ENCODE measurements at regions of chr10 and their contacts with region 1.

Region 1: DNA sequence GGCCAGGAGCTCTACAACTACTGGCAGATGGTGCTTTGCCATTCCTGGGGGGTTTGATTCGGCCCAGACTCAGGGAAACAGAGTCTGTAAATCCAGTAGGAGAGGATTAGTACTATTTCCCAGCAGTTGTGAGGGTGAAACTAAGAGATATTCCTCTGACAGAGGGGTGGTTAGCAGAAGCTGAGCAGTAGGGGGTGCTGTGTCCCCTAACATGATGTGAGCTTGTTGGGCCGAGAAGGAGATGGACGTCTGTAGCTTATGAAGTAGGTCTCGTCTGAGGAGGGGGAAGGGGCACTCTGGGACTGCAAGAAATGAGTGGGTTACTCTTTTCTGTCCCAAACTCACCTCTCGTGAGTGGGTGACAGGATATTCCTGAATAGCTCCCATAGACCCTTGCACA is 179.2 kb upstream of the MBL2 start:
- DNase-seq: peak in 1 of 2 experiments; percentile 45
- H3K4me3 ChIP-seq: no peak overlapping the region
- H3K27ac ChIP-seq: no peak overlapping the region
- H3K4me1 ChIP-seq: no peaks in the 10 kb centered on the region
- H3K27me3 ChIP-seq: no peaks in the 10 kb centered on the region
- CTCF ChIP-seq: peak; percentile 56

Region 2: DNA sequence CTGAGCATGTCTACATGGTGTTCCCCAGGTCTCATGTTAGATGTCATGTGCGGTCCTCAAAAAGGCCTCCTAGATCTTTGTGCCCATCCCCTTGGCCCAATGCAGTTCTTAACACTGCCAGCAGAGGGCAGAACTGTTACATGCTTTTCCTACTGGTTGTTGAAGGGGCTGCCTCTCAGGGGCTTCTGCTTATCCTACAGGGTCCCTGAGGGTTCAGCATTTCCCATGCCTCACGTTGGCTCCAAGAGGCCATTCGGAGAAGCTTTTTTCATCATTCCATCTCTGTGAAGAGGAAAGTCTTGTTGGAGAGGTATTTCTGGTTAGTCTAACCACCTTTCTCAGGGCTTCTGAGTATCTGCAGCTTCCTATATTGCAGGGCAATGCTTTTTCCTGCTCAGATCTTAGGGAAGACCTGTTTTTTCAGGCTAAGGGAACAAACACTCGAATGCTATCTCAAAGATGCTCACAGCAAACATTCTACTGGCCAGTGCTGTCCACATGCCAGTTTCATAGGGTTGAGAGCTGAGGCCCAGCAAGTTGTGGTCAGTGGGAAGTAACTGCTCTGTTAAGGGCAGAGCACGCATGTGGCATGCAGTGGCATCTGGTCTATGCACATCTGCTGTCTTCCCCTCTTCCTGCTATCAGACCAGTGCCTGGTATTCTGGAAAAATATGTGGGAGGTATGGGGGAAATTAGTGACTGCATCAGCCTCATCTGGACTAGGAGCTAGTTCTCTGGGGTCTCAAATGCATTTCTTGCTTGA is 210.7 kb before region 1 on chr10:
- CTCF ChIA-PET with region 1: no interaction called
- POLR2A ChIA-PET with region 1: no interaction called
- intact Hi-C with region 1: no loop called
- DNase-seq: peak in 1 of 2 experiments; percentile 39
- H3K4me3 ChIP-seq: no peak overlapping the region
- H3K27ac ChIP-seq: no peak overlapping the region
- H3K4me1 ChIP-seq: no peaks in the 10 kb centered on the region
- H3K27me3 ChIP-seq: no peaks in the 10 kb centered on the region
- CTCF ChIP-seq: peak; percentile 99

Region 3: GRCh38 chr10:52918714-52919305 is 33.0 kb before region 1 on chr10:
- CTCF ChIA-PET with region 1: no interaction called
- POLR2A ChIA-PET with region 1: no interaction called
- intact Hi-C with region 1: no loop called
- DNase-seq: no peak
- H3K4me3 ChIP-seq: no peak overlapping the region
- H3K27ac ChIP-seq: no peak overlapping the region
- H3K4me1 ChIP-seq: no peaks in the 10 kb centered on the region
- H3K27me3 ChIP-seq: no peaks in the 10 kb centered on the region
- CTCF ChIP-seq: no peak

Region 4: GRCh38 chr10:52979295-52979990 is 27.6 kb after region 1 on chr10:
- CTCF ChIA-PET with region 1: no interaction called
- POLR2A ChIA-PET with region 1: interaction called, 13 read pairs
- intact Hi-C with region 1: no loop called
- DNase-seq: no peak
- H3K4me3 ChIP-seq: no peak overlapping the region
- H3K27ac ChIP-seq: no peak overlapping the region
- H3K4me1 ChIP-seq: no peaks in the 10 kb centered on the region
- H3K27me3 ChIP-seq: no peaks in the 10 kb centered on the region
- CTCF ChIP-seq: no peak

Region 5: DNA sequence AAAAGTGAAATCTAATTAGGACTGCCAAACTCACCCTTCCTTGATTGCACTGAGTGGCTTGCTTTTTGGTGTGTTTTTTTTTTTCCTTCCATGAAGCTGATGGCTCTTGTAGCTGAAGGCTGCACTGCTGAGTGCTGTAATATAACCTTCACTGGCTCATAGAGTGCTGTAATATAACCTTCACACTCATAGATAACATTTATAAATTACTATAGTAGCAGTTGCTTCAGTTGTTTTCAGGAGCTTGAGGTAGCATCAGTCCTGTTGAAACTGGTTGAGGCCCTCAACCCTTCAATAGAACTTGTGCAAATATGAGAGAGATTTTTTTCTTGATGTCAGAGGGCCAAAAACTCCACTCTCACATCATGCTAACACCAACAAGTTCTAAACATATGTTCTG is 225.6 kb after region 1 on chr10:
- CTCF ChIA-PET with region 1: no interaction called
- POLR2A ChIA-PET with region 1: no interaction called
- intact Hi-C with region 1: loop called (anchors 10 kb)
- DNase-seq: no peak
- H3K4me3 ChIP-seq: no peak overlapping the region
- H3K27ac ChIP-seq: no peak overlapping the region
- H3K4me1 ChIP-seq: no peaks in the 10 kb centered on the region
- H3K27me3 ChIP-seq: no peaks in the 10 kb centered on the region
- CTCF ChIP-seq: no peak